T-cell (primary cell): ENCODE measurements at regions of chr1 and their contacts with region 1.

Region 1: GRCh38 chr1:45643978-45644377 is 20.1 kb upstream of the CCDC17 start:
- DNase-seq: no peak
- ATAC-seq: no peak
- H3K4me3 ChIP-seq: no peak overlapping the region
- H3K4me3 Mint-ChIP-seq: no peak overlapping the region
- H3K27ac ChIP-seq: no peak overlapping the region
- H3K27ac Mint-ChIP-seq: peak overlapping the region in 1 of 2 donors; percentile 7
- H3K4me1 ChIP-seq: no peaks in the 10 kb centered on the region
- H3K4me1 Mint-ChIP-seq: peaks cover 4 to 14% (median 11%) of the 10 kb centered on the region in 3 donors
- H3K27me3 ChIP-seq: no peaks in the 10 kb centered on the region
- H3K27me3 Mint-ChIP-seq: no peaks in the 10 kb centered on the region

Region 2: GRCh38 chr1:45589861-45590260 is 54.1 kb before region 1 on chr1:
- CTCF ChIA-PET with region 1: interaction called in 1 of 2 experiments, 13 read pairs
- POLR2A ChIA-PET with region 1: no interaction called
- DNase-seq: no peak
- ATAC-seq: no peak
- H3K4me3 ChIP-seq: no peak overlapping the region
- H3K4me3 Mint-ChIP-seq: no peak overlapping the region
- H3K27ac ChIP-seq: no peak overlapping the region
- H3K27ac Mint-ChIP-seq: no peak overlapping the region
- H3K4me1 ChIP-seq: peaks cover 18 to 25% of the 10 kb centered on the region in 2 experiments
- H3K4me1 Mint-ChIP-seq: peaks cover 31 to 44% (median 41%) of the 10 kb centered on the region in 3 donors
- H3K27me3 ChIP-seq: no peaks in the 10 kb centered on the region
- H3K27me3 Mint-ChIP-seq: no peaks in the 10 kb centered on the region

Region 3: GRCh38 chr1:45704637-45705036 is 60.7 kb after region 1 on chr1:
- CTCF ChIA-PET with region 1: no interaction called
- POLR2A ChIA-PET with region 1: no interaction called
- DNase-seq: no peak
- ATAC-seq: no peak
- H3K4me3 ChIP-seq: no peak overlapping the region
- H3K4me3 Mint-ChIP-seq: no peak overlapping the region
- H3K27ac ChIP-seq: no peak overlapping the region
- H3K27ac Mint-ChIP-seq: no peak overlapping the region
- H3K4me1 ChIP-seq: no peaks in the 10 kb centered on the region
- H3K4me1 Mint-ChIP-seq: no peaks in the 10 kb centered on the region
- H3K27me3 ChIP-seq: no peaks in the 10 kb centered on the region
- H3K27me3 Mint-ChIP-seq: no peaks in the 10 kb centered on the region

Region 4: GRCh38 chr1:45803301-45803780 is 159.4 kb after region 1 on chr1 and contains the start of gene MAST2:
- CTCF ChIA-PET with region 1: no interaction called
- POLR2A ChIA-PET with region 1: no interaction called
- DNase-seq: peak; percentile 46 to 90 (median 72)
- ATAC-seq: peak; percentile 94 to 98 (median 97)
- H3K4me3 ChIP-seq: peak within 1 kb of the TSS; percentile 42 to 49
- H3K4me3 Mint-ChIP-seq: peak within 1 kb of the TSS; percentile 84 to 91 (median 88)
- H3K27ac ChIP-seq: no peak within 1 kb of the TSS
- H3K27ac Mint-ChIP-seq: peak within 1 kb of the TSS in 1 of 2 donors; percentile 81
- H3K4me1 ChIP-seq: peaks cover 0 to 12% of the 10 kb centered on the region in 2 experiments
- H3K4me1 Mint-ChIP-seq: peaks cover 19 to 27% (median 24%) of the 10 kb centered on the region in 3 donors
- H3K27me3 ChIP-seq: no peaks in the 10 kb centered on the region
- H3K27me3 Mint-ChIP-seq: no peaks in the 10 kb centered on the region
- total RNA-seq, gene MAST2: 7.4 to 9.7 (median 7.6) TPM